OCI-LY7 (cell line): ENCODE measurements at regions of chr7 and their contacts with region 1.

Region 1: GRCh38 chr7:131068604-131069021 is 259.1 kb upstream of the MKLN1 start:
- DNase-seq: no peak
- H3K4me3 ChIP-seq: no peak overlapping the region
- H3K27ac ChIP-seq: no peak overlapping the region
- H3K4me1 ChIP-seq: peaks cover 40% of the 10 kb centered on the region
- CTCF ChIP-seq: peak; percentile 45; the same call in 1 of the 2 replicates

Region 2: GRCh38 chr7:131057015-131057793 is 11.4 kb before region 1 on chr7:
- CTCF ChIA-PET with region 1: interaction called, 5 read pairs
- POLR2A ChIA-PET with region 1: interaction called, 18 read pairs
- intact Hi-C with region 1: no loop called
- DNase-seq: peak; percentile 73
- H3K4me3 ChIP-seq: peak overlapping the region; percentile 25
- H3K27ac ChIP-seq: peak overlapping the region; percentile 85
- H3K4me1 ChIP-seq: peaks cover 31% of the 10 kb centered on the region
- CTCF ChIP-seq: no peak

Region 3: GRCh38 chr7:131302876-131303707 is 234.5 kb after region 1 on chr7:
- CTCF ChIA-PET with region 1: interaction called, 5 read pairs
- POLR2A ChIA-PET with region 1: no interaction called
- intact Hi-C with region 1: loop called (anchors 1 kb)
- DNase-seq: peak; percentile 37
- H3K4me3 ChIP-seq: no peak overlapping the region
- H3K27ac ChIP-seq: no peak overlapping the region
- H3K4me1 ChIP-seq: peaks cover 6% of the 10 kb centered on the region
- CTCF ChIP-seq: peak; percentile 74

Region 4: GRCh38 chr7:131424219-131424822 is 355.7 kb after region 1 on chr7:
- CTCF ChIA-PET with region 1: interaction called, 4 read pairs
- POLR2A ChIA-PET with region 1: no interaction called
- intact Hi-C with region 1: loop called (anchors 1 kb)
- DNase-seq: peak; percentile 64
- H3K4me3 ChIP-seq: no peak overlapping the region
- H3K27ac ChIP-seq: no peak overlapping the region
- H3K4me1 ChIP-seq: peaks cover 7% of the 10 kb centered on the region
- CTCF ChIP-seq: peak; percentile 79